Mammary epithelial cell (primary cell): ENCODE measurements at regions of chr3 and their contacts with region 1.

Region 1: DNA sequence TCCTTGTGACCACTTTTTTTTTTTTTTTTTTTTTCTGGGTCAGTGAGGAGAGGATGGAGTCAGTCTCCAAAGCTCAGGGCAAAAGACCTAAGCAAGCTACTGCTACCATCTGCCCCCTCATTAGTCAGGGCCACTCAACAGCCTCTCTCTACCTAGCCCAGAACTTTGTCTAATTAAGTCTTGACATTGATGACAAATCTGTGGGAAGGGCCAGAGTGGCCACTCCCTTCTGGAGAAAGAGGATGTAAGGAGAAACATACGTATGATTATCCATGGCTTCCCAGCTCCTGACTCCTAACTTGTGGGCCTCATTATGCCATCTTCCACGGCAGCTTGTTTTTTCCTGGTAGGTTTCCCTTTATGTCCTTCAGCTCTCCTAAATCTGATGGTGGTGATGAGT is 37.9 kb downstream of the NR1I2 start:
- DNase-seq: peak; percentile 26
- H3K4me3 ChIP-seq: no peak overlapping the region
- H3K27ac ChIP-seq: no peak overlapping the region
- H3K4me1 ChIP-seq: peaks cover 5% of the 10 kb centered on the region
- H3K27me3 ChIP-seq: no peaks in the 10 kb centered on the region
- CTCF ChIP-seq: no peak

Region 2: GRCh38 chr3:119831022-119831421 is 11.2 kb after region 1 on chr3:
- CTCF ChIA-PET with region 1: interaction called, 17 read pairs
- dilution Hi-C with region 1: no loop called
- in situ Hi-C with region 1: no loop called
- intact Hi-C with region 1: no loop called
- DNase-seq: no peak
- H3K4me3 ChIP-seq: no peak overlapping the region
- H3K27ac ChIP-seq: no peak overlapping the region
- H3K4me1 ChIP-seq: peaks cover 9% of the 10 kb centered on the region
- H3K27me3 ChIP-seq: no peaks in the 10 kb centered on the region
- CTCF ChIP-seq: peak; percentile 14 to 26

Region 3: GRCh38 chr3:120182724-120183524 is 363.1 kb after region 1 on chr3:
- CTCF ChIA-PET with region 1: no interaction called
- dilution Hi-C with region 1: no loop called
- in situ Hi-C with region 1: no loop called
- intact Hi-C with region 1: loop called (anchors 5 kb)
- DNase-seq: peak; percentile 60
- H3K4me3 ChIP-seq: no peak overlapping the region
- H3K27ac ChIP-seq: no peak overlapping the region
- H3K4me1 ChIP-seq: peaks cover 31% of the 10 kb centered on the region
- H3K27me3 ChIP-seq: no peaks in the 10 kb centered on the region
- CTCF ChIP-seq: peak; percentile 50 to 55

Region 4: DNA sequence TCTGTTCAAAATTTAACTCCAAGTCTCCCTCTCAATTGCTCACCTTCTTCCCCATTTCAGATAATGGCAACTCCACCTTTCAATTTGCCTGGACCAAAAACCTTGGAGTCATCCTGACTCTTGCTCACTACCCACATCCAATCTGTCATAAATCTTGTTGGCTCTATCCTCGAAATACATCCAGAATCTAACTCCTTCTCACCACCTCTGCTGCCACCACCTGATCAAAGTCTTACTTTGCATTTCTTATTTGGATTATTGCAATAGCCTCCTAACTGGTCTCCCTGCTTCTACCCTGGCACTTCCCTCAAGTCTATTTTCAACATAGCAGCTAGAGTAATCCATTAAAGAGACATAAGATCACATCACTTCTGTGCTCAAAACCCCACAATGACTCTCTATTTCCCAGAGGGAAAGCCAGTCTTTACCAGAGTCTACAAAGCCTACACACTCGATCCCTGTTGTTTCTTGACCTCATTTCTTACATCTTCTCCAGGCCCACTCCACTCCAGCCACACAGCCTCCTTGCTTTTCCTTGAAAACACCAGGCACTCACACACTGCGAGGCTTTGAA is 378.6 kb after region 1 on chr3:
- CTCF ChIA-PET with region 1: interaction called, 3 read pairs
- dilution Hi-C with region 1: no loop called
- in situ Hi-C with region 1: no loop called
- intact Hi-C with region 1: loop called (anchors 5 kb)
- DNase-seq: peak; percentile 67
- H3K4me3 ChIP-seq: no peak overlapping the region
- H3K27ac ChIP-seq: no peak overlapping the region
- H3K4me1 ChIP-seq: peaks cover 8% of the 10 kb centered on the region
- H3K27me3 ChIP-seq: no peaks in the 10 kb centered on the region
- CTCF ChIP-seq: peak; percentile 40 to 58

Region 5: GRCh38 chr3:120265989-120266388 is 446.2 kb after region 1 on chr3:
- CTCF ChIA-PET with region 1: interaction called, 12 read pairs
- dilution Hi-C with region 1: no loop called
- in situ Hi-C with region 1: no loop called
- intact Hi-C with region 1: no loop called
- DNase-seq: no peak
- H3K4me3 ChIP-seq: no peak overlapping the region
- H3K27ac ChIP-seq: no peak overlapping the region
- H3K4me1 ChIP-seq: no peaks in the 10 kb centered on the region
- H3K27me3 ChIP-seq: peaks cover 4% of the 10 kb centered on the region
- CTCF ChIP-seq: no peak